SK-N-SH (cell line): ENCODE measurements at regions of chr22 and their contacts with region 1.

Region 1: GRCh38 chr22:29727131-29727523 is 7.3 kb downstream of the CABP7 start:
- DNase-seq: peak; percentile 91
- H3K4me3 ChIP-seq: no peak overlapping the region
- H3K27ac ChIP-seq: no peak overlapping the region; a peak in 1 of 4 replicates
- H3K4me1 ChIP-seq: peaks cover 0 to 27% of the 10 kb centered on the region in 2 experiments; a peak in 1 of 4 replicates
- H3K27me3 ChIP-seq: no peaks in the 10 kb centered on the region
- CTCF ChIP-seq: peak; percentile 32
- EP300 ChIP-seq: no peak
- RAD21 ChIP-seq: peak; percentile 60

Region 2: DNA sequence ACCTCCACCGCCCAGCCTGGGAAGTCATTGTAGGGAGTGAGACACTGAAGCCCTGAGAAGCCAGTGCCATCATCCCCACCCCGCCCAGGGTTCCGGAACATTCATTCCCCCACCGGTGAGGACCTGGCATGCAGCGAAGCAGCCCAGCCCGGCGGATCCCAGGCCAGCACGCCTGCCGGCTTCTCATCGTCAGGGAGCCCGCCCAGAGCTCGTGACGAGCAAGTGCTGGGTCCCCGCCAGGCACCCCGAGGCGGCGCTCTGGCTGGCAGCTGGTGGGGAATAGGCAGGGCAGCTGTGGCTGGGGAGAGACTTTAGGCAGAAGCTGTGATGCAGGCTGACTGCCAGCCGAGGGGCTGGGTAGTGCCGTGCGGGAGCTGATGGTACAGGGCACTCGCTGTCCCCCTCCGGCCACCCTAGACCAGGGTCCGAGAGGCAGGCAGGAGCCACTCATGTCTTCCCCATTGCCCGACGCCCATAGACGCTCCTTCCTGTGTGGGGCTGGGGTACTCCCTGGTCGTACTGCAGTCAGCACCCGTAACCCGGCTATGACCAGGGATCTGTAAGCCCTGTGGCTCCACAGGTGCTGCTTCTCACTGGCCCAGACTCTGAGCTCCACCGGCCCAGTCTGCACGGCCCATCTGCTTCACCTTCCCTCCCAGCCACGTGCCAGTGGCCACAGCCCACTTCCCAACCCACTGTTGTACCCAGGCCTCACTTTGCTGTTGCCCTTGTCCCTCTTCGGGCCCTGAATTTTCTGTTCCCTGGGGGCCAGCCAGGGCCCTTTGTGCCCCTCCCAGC is 31.8 kb before region 1 on chr22:
- CTCF ChIA-PET with region 1: interaction called, 17 read pairs
- POLR2A ChIA-PET with region 1: interaction called, 3 read pairs
- DNase-seq: peak; percentile 86
- H3K4me3 ChIP-seq: no peak overlapping the region
- H3K27ac ChIP-seq: peak overlapping the region in 1 of 2 experiments; percentile 77; a peak in 2 of 4 replicates
- H3K4me1 ChIP-seq: peaks cover 10 to 75% of the 10 kb centered on the region in 2 experiments
- H3K27me3 ChIP-seq: no peaks in the 10 kb centered on the region
- CTCF ChIP-seq: no peak
- EP300 ChIP-seq: peak in 1 of 2 experiments; percentile 74; a peak in 2 of 4 replicates
- RAD21 ChIP-seq: peak; percentile 23; the same call in 1 of the 2 replicates

Region 3: GRCh38 chr22:29701155-29701999 is 25.8 kb before region 1 on chr22:
- CTCF ChIA-PET with region 1: interaction called, 10 read pairs
- POLR2A ChIA-PET with region 1: no interaction called
- DNase-seq: peak; percentile 64
- H3K4me3 ChIP-seq: no peak overlapping the region
- H3K27ac ChIP-seq: peak overlapping the region in 1 of 2 experiments; percentile 69; a peak in 2 of 4 replicates
- H3K4me1 ChIP-seq: peaks cover 12 to 86% of the 10 kb centered on the region in 2 experiments; a peak in 2 of 4 replicates
- H3K27me3 ChIP-seq: no peaks in the 10 kb centered on the region
- CTCF ChIP-seq: peak; percentile 12; the same call in 1 of the 2 replicates
- EP300 ChIP-seq: peak in 1 of 2 experiments; percentile 25; a peak in 1 of 4 replicates
- RAD21 ChIP-seq: 0 out of 2 replicates have a peak, but pooled peaks have one; percentile 10

Region 4: DNA sequence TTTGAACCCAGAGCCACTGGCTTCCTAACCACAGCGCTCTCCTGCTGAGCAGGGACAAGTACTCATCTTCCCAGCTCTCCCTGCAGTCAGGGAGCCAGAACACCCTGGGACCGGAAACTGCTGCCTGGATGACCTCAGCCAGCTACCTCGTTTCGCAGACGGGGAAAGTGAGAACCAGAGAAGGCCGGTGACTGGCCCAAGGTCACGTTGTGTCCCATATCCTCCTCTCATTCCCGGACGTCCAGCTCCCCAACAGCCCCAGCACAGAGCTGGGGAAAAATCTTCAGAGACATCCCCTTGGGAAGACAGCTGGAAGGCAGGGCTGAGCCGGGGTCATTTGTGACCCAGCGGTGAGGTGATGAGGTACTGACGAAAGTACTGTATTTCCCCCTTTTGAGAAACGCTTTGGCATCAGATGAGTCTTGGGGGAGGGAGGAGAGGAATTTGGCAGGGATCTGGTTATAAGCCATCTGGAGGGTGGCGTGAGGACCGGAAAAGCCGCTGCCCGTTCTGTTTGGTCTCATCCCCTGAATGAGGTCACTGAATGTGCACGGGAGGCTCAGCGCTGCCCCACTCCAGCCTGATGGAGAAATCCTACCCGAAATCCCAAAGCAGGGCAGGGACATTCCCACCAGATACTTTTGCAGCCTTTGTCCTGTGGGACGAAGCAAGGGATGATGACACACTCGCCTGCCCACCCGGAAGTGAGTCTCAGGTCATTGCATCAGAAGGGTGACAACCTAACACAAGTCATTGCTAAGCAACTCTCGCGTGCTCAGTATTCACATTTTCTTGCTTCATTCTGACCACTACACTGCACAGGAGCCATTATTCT is 478.4 kb after region 1 on chr22:
- CTCF ChIA-PET with region 1: no interaction called
- POLR2A ChIA-PET with region 1: no interaction called
- DNase-seq: peak; percentile 48
- H3K4me3 ChIP-seq: no peak overlapping the region
- H3K27ac ChIP-seq: peak overlapping the region; percentile 70 to 94; a peak in 3 of 4 replicates
- H3K4me1 ChIP-seq: peaks cover 36 to 61% of the 10 kb centered on the region in 2 experiments; a peak in 3 of 4 replicates
- H3K27me3 ChIP-seq: no peaks in the 10 kb centered on the region
- CTCF ChIP-seq: no peak
- EP300 ChIP-seq: peak in 1 of 2 experiments; percentile 55; a peak in 1 of 4 replicates
- RAD21 ChIP-seq: no peak